B cell (primary cell): ENCODE measurements at regions of chr6 and their contacts with region 1.

Region 1: DNA sequence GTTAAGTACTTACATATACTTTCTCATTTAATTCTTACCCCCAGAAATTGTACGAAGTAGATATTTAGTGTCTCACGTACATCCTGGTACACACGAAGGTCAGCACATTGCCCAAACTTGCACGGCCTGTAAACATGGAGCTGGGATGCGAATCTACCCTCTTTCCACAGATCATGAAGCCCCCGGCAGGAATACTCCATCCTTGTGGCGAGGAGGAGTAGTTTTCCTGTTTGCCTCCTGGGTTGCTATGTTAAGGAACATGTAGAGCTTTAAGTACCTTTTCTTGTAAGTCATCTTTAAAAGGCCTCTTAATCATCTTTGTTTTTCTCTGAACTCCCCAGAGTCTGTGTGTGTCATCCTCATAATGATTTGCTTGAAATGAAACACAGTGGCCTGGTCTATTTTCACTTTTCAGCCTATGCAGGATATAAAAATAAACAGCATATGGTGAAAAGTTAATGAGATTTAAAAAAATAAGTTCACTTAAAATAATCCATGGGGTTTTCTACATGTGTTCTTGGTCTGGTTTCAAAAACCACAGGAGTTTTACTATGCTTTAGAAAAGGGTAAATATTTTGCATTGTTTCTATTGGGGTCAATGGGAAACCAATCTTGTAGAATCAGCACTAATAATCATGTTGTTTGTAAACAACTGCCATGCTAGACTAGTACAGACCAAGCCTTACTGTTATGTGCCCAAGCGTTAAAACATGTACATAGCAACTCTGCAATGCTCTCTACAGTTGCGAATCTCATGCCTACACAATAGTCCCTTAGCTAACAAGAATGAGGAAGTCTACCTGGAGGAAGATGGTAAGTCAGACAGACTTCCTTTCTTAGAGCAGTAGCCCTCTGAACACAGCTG is 9.3 kb upstream of the ARID1B start:
- DNase-seq: peak; percentile 73
- ATAC-seq: peak; percentile 92
- H3K4me3 ChIP-seq: no peak overlapping the region
- H3K4me3 Mint-ChIP-seq: peak overlapping the region; percentile 69
- H3K27ac ChIP-seq: peak overlapping the region; percentile 29 to 75
- H3K27ac Mint-ChIP-seq: peak overlapping the region; percentile 93
- H3K4me1 ChIP-seq: peaks cover 23 to 24% of the 10 kb centered on the region in 2 donors
- H3K4me1 Mint-ChIP-seq: peaks cover 22% of the 10 kb centered on the region
- H3K27me3 ChIP-seq: no peaks in the 10 kb centered on the region
- H3K27me3 Mint-ChIP-seq: no peaks in the 10 kb centered on the region
- CTCF ChIP-seq: peak; percentile 18

Region 2: GRCh38 chr6:155818698-155819097 is 949.1 kb before region 1 on chr6:
- CTCF ChIA-PET with region 1: no interaction called
- POLR2A ChIA-PET with region 1: no interaction called
- intact Hi-C with region 1: no loop called
- DNase-seq: no peak
- ATAC-seq: no peak
- H3K4me3 ChIP-seq: no peak overlapping the region
- H3K4me3 Mint-ChIP-seq: no peak overlapping the region
- H3K27ac ChIP-seq: no peak overlapping the region
- H3K27ac Mint-ChIP-seq: no peak overlapping the region
- H3K4me1 ChIP-seq: no peaks in the 10 kb centered on the region
- H3K4me1 Mint-ChIP-seq: no peaks in the 10 kb centered on the region
- H3K27me3 ChIP-seq: no peaks in the 10 kb centered on the region
- H3K27me3 Mint-ChIP-seq: peaks cover 3% of the 10 kb centered on the region
- CTCF ChIP-seq: no peak

Region 3: GRCh38 chr6:156752666-156753301 is 15.1 kb before region 1 on chr6:
- CTCF ChIA-PET with region 1: interaction called, 23 read pairs
- POLR2A ChIA-PET with region 1: interaction called, 9 read pairs
- intact Hi-C with region 1: loop called (anchors 2 kb)
- DNase-seq: peak; percentile 76
- ATAC-seq: peak; percentile 94
- H3K4me3 ChIP-seq: peak overlapping the region in 1 of 5 experiments; percentile 8
- H3K4me3 Mint-ChIP-seq: peak overlapping the region; percentile 80
- H3K27ac ChIP-seq: peak overlapping the region; percentile 43 to 67
- H3K27ac Mint-ChIP-seq: peak overlapping the region; percentile 95
- H3K4me1 ChIP-seq: peaks cover 42 to 48% of the 10 kb centered on the region in 2 donors
- H3K4me1 Mint-ChIP-seq: peaks cover 38% of the 10 kb centered on the region
- H3K27me3 ChIP-seq: no peaks in the 10 kb centered on the region
- H3K27me3 Mint-ChIP-seq: no peaks in the 10 kb centered on the region
- CTCF ChIP-seq: no peak

Region 4: DNA sequence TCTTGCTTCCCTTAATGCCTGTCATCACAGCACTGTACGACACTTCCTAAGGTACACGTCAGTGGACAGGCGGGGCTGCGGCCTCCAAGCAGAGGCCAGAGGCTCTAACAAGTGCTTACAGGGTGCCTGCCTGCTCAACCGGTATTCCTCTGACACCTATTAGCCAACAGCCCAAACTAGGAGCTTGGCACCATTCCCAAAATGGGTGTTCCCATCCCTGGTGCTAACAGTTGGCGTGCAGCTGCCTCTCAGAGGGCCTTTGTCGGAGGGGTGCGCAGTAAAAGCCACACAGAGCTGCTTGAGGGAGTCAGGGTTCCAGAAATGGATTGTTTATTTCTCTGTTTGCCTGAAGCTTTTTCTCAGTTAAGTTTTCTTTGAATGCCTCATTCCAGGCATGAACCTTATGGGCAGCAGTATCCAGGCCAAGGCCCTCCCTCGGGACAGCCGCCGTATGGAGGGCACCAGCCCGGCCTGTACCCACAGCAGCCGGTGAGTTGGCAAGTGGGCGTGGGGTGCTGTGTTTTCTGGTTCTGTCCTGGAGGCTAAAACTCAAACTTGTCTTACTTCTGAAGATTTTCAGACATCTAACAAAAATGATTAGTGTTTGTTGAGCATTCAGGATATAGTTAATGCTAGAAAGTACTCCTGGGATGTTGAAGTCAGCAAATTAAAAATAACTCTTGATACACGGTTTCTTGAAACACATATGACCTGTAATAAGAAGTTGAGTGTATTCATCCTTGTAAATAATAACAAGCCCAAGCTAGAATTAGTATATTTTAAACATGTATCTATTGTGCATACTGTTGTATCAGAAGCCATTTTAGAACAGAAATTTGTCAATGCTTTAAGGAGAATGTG is 430.8 kb after region 1 on chr6:
- CTCF ChIA-PET with region 1: no interaction called
- POLR2A ChIA-PET with region 1: no interaction called
- intact Hi-C with region 1: no loop called
- DNase-seq: no peak
- ATAC-seq: no peak
- H3K4me3 ChIP-seq: no peak overlapping the region
- H3K4me3 Mint-ChIP-seq: no peak overlapping the region
- H3K27ac ChIP-seq: no peak overlapping the region
- H3K27ac Mint-ChIP-seq: no peak overlapping the region
- H3K4me1 ChIP-seq: no peaks in the 10 kb centered on the region
- H3K4me1 Mint-ChIP-seq: peaks cover 4% of the 10 kb centered on the region
- H3K27me3 ChIP-seq: no peaks in the 10 kb centered on the region
- H3K27me3 Mint-ChIP-seq: no peaks in the 10 kb centered on the region
- CTCF ChIP-seq: no peak